Activated T-helper 2 cell treated with anti-CD3 and anti-CD28 coated beads, Interferon-gamma antibody, Interleukin-2, Interleukin-4, amounts not matched to agents 10 μg/mL and 5 μg/mL and 100 μg/mL, durations not matched to agents 14 hours and 24 hours and 36 hours (primary cell): ENCODE measurements at regions of chr5 and their contacts with region 1.

Region 1: DNA sequence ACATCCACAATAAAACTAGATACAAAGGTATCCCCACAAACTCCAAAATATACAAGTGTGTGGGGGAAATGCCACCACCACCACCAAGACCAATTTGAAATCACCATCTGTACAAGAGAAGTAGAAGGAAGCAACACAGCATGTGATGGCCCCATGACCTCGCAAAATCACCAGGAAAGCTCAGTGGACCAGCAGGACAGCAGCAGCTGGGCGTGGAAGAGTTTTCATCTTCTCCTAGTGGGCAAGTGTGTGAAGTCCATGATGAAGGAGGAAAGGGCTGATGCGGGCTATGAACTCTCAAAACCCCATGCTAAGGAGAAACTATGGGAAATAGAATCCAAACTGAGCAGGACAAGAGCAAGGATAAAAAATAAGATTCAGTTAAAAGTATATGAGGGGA is 58.1 kb downstream of the GOLPH3 start:
- DNase-seq: no peak
- H3K4me3 Mint-ChIP-seq: no peak overlapping the region
- H3K27ac Mint-ChIP-seq: peak overlapping the region; percentile 77
- H3K4me1 Mint-ChIP-seq: peaks cover 32% of the 10 kb centered on the region
- H3K27me3 Mint-ChIP-seq: no peaks in the 10 kb centered on the region

Region 2: DNA sequence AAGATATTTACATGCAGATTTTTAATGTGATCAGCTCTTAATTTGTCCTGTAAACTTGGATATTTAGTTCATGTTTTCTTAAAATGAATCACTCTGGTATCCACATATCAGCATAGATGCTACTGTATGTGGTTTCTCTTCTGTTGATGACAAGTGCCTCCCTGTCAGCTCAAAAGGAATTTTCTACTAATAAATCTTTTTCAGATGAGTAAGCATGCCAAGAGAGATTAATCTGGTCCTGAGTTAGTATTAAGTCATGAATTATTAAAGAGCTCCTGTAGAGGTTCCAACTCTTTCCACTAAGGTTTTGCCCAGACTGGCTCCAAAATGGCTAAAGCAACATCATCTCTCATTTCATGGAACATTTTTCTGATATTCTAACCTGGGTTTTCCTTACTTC is 71.0 kb before region 1 on chr5:
- intact Hi-C with region 1: no loop called
- DNase-seq: no peak
- H3K4me3 Mint-ChIP-seq: no peak overlapping the region
- H3K27ac Mint-ChIP-seq: no peak overlapping the region
- H3K4me1 Mint-ChIP-seq: no peaks in the 10 kb centered on the region
- H3K27me3 Mint-ChIP-seq: peaks cover 5% of the 10 kb centered on the region

Region 3: GRCh38 chr5:32138839-32139493 is 23.0 kb after region 1 on chr5:
- intact Hi-C with region 1: loop called (anchors 2 kb)
- DNase-seq: peak; percentile 28
- H3K4me3 Mint-ChIP-seq: peak overlapping the region; percentile 22
- H3K27ac Mint-ChIP-seq: peak overlapping the region; percentile 93
- H3K4me1 Mint-ChIP-seq: peaks cover 24% of the 10 kb centered on the region
- H3K27me3 Mint-ChIP-seq: no peaks in the 10 kb centered on the region

Region 4: DNA sequence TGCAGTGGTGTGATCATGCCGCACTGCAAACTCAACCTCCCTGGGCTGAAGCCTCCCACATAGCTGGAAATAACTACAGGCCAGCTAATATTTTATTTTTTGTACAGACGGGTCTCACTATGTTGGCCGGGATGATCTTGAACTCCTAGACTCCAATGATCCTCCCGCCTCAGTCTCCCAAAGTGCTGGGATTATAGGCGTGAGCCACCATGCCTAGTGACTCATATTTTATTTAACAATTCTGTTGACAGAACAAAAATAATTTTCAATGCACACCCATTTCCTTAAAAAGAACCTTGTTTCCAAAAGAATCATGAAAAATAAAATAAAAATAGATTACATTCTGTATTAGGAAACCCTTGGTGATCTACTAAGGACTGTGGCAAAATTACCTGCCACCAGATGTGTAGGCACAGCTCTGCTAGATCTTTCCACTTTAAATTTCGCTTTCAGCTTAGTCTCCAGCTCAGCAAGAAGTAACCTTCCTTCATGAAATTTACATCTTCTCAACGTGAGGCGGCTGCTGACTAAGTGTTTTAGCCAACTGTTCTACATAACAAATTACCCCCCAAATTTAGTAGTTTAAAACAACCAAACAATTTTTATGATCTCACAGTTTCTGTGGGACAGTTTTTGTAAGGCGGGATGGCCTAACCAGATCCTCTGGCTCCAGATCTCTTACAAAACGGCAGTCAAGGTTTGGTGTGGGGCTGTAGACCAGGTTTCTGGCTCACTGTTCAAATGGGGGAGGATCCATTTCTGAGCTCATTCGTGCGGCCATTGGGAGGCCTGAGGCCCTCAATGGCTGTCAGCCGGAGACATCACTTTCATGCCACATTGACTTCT is 90.7 kb after region 1 on chr5:
- intact Hi-C with region 1: loop called (anchors 2 kb)
- DNase-seq: no peak
- H3K4me3 Mint-ChIP-seq: no peak overlapping the region
- H3K27ac Mint-ChIP-seq: peak overlapping the region; percentile 38
- H3K4me1 Mint-ChIP-seq: peaks cover 23% of the 10 kb centered on the region
- H3K27me3 Mint-ChIP-seq: no peaks in the 10 kb centered on the region